ENCODE measurements at regions of chr10 and their contacts with region 1.

Region 1: GRCh38 chr10:48623607-48624132 is 18.8 kb upstream of the ARHGAP22 start:
- H3K4me3 ChIP-seq: no peak overlapping the region
- H3K27ac ChIP-seq: no peak overlapping the region
- H3K4me1 ChIP-seq: no peaks in the 10 kb centered on the region
- CTCF ChIP-seq: no peak

Region 2: DNA sequence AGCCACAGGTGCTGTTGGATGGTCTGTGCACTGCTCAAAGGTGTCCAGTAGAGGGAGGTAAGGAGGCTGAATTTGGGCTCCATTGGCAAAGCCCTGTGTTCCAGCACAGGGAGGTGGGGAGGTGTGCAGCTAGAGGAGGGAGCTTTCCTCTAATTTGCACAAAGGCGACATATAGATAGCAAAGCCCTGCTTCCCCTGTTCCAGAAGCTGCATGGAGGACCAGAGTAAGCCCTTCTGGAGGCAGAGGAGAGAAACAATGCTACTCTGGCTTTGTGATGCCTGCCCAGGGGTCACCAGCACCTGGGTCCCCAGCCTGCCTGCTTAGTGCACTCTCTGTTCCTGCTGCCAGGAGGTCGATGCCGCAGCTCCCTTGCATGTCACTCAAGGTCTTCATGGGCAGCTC is 15.4 kb before region 1 on chr10:
- CTCF ChIA-PET with region 1: interaction called, 12 read pairs
- POLR2A ChIA-PET with region 1: no interaction called
- H3K4me3 ChIP-seq: no peak overlapping the region
- H3K27ac ChIP-seq: no peak overlapping the region
- H3K4me1 ChIP-seq: no peaks in the 10 kb centered on the region
- CTCF ChIP-seq: peak; percentile 40; the same call in 1 of the 2 replicates

Region 3: GRCh38 chr10:48634198-48634983 is 10.7 kb after region 1 on chr10:
- CTCF ChIA-PET with region 1: no interaction called
- POLR2A ChIA-PET with region 1: no interaction called
- H3K4me3 ChIP-seq: no peak overlapping the region
- H3K27ac ChIP-seq: no peak overlapping the region
- H3K4me1 ChIP-seq: no peaks in the 10 kb centered on the region
- CTCF ChIP-seq: no peak

Region 4: DNA sequence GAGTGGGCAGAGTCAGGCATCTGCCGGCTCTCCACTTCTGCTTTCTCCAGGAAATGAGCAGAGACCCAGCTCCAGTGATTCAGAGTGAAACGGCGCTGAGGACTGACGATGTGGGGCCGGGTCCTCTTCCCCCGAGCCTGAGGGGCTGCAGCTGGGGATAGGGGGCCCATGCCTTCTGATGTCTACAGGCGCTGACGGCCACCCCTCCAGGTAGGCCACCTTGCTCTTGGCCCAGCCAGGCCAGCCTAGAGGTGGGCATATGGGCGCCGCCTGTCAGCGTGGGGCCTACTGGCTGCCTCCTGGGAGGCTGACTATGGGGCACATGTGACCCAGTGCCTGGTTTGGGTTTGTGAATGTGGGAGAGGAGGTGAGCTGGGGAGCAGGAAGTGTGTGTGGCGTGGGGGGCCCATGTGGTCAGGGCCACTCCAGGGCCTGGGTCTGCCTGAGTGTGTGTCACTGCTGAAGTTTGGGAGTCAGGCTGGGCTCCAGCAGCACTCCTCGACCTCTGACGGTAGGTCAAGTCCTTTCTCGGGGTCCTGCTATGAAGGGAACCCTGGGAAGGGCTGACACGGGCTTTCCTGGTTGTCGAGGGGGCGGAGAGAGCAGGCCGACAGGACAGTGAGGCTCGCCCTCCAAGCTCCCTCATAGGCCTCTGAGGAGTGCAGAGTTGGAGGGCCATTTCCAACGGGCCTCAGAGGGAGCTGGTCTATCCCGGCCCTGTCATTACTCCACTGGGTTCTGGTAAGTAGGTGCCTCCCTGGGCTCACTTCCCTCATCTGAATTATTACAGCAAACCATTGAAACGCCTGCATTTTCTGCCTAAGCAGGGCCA is 61.3 kb after region 1 on chr10 and contains the start of gene WDFY4:
- CTCF ChIA-PET with region 1: no interaction called
- POLR2A ChIA-PET with region 1: no interaction called
- H3K4me3 ChIP-seq: no peak within 1 kb of the TSS
- H3K27ac ChIP-seq: no peak within 1 kb of the TSS
- H3K4me1 ChIP-seq: no peaks in the 10 kb centered on the region
- CTCF ChIP-seq: no peak

Measured in HEK293 (cell line).